ENCODE measurements at regions of chr11 and their contacts with region 1.

Region 1: DNA sequence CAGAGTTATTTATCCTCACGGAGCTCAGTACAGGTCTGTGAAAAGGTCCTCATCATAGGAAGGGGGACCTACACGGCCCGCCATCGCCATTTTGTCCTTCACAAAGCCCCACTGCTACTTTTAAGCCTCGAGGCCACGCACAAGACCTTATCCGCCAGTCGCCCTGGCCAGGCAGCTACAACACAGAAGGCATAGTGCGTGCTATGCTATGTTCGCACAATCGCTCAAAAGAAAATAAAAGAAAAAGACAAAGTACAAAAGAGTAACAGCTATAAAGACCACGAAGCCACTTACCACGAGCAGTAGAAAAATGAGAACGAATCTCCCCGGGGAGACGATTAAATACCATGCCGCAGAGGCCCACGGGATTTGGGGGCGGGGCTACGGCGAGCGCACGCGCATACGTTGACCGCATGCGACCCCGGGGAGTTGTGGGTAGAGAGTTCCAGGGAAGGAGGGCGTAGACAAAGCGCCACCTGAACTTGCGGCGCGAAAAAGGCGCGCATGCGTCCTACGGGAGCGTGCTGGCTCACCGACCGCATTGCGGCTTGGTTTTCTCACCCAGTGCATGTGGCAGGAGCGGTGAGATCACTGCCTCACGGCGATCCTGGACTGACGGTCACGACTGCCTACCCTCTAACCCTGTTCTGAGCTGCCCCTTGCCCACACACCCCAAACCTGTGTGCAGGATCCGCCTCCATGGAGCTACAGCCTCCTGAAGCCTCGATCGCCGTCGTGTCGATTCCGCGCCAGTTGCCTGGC is 16.4 kb upstream of the WDR74 start:
- DNase-seq: peak; percentile 98 to 99
- H3K4me3 ChIP-seq: peak overlapping the region; percentile 74 to 100 (median 90)
- H3K27ac ChIP-seq: peak overlapping the region; percentile 96
- H3K4me1 ChIP-seq: peaks cover 4 to 7% (median 7%) of the 10 kb centered on the region in 4 experiments; a peak in 4 of 7 replicates
- H3K27me3 ChIP-seq: no peaks in the 10 kb centered on the region
- CTCF ChIP-seq: no peak
- EP300 ChIP-seq: no peak
- POLR2A ChIP-seq: peak; percentile 98 to 99
- RAD21 ChIP-seq: no peak

Region 2: GRCh38 chr11:62580959-62581715 is 274.6 kb before region 1 on chr11:
- CTCF ChIA-PET with region 1: no interaction called
- POLR2A ChIA-PET with region 1: no interaction called
- DNase-seq: no peak
- H3K4me3 ChIP-seq: no peak overlapping the region
- H3K27ac ChIP-seq: no peak overlapping the region
- H3K4me1 ChIP-seq: no peaks in the 10 kb centered on the region
- H3K27me3 ChIP-seq: no peaks in the 10 kb centered on the region
- CTCF ChIP-seq: no peak
- EP300 ChIP-seq: no peak
- POLR2A ChIP-seq: no peak
- RAD21 ChIP-seq: no peak

Region 3: GRCh38 chr11:62726915-62727763 is 128.6 kb before region 1 on chr11 and contains the start of gene HNRNPUL2:
- CTCF ChIA-PET with region 1: no interaction called
- POLR2A ChIA-PET with region 1: interaction called, 98 read pairs
- DNase-seq: peak; percentile 94 to 97
- H3K4me3 ChIP-seq: peak within 1 kb of the TSS; percentile 87 to 98 (median 96)
- H3K27ac ChIP-seq: peak within 1 kb of the TSS; percentile 92
- H3K4me1 ChIP-seq: no peaks in the 10 kb centered on the region; a peak in 3 of 7 replicates
- H3K27me3 ChIP-seq: no peaks in the 10 kb centered on the region
- CTCF ChIP-seq: no peak
- EP300 ChIP-seq: 0 out of 3 replicates have a peak, but pooled peaks of 1 of the 2 experiments have one; percentile 25
- POLR2A ChIP-seq: peak; percentile 90
- RAD21 ChIP-seq: no peak
- total RNA-seq, gene HNRNPUL2: 44.3 and 46.4 TPM in 2 replicates

Region 4: GRCh38 chr11:62771144-62772021 is 84.4 kb before region 1 on chr11 and contains the start of gene TAF6L:
- CTCF ChIA-PET with region 1: interaction called, 3 read pairs
- POLR2A ChIA-PET with region 1: interaction called, 76 read pairs
- DNase-seq: peak; percentile 75 to 98
- H3K4me3 ChIP-seq: peak within 1 kb of the TSS; percentile 77 to 95 (median 92)
- H3K27ac ChIP-seq: peak within 1 kb of the TSS; percentile 72
- H3K4me1 ChIP-seq: peaks cover 0 to 9% (median 5%) of the 10 kb centered on the region in 4 experiments; a peak in 6 of 7 replicates
- H3K27me3 ChIP-seq: no peaks in the 10 kb centered on the region
- CTCF ChIP-seq: no peak
- EP300 ChIP-seq: no peak
- POLR2A ChIP-seq: peak; percentile 78 to 95
- RAD21 ChIP-seq: no peak
- total RNA-seq, gene TAF6L: 29.6 and 31.9 TPM in 2 replicates

Region 5: GRCh38 chr11:62805076-62805892 is 50.5 kb before region 1 on chr11 and contains the start of gene NXF1:
- CTCF ChIA-PET with region 1: no interaction called
- POLR2A ChIA-PET with region 1: interaction called, 67 read pairs
- DNase-seq: peak; percentile 96 to 100
- H3K4me3 ChIP-seq: peak within 1 kb of the TSS; percentile 66 to 85 (median 81)
- H3K27ac ChIP-seq: peak within 1 kb of the TSS; percentile 48; the same call in 1 of the 2 replicates
- H3K4me1 ChIP-seq: peaks cover 0 to 5% (median under 1%) of the 10 kb centered on the region in 4 experiments; a peak in 1 of 7 replicates
- H3K27me3 ChIP-seq: no peaks in the 10 kb centered on the region
- CTCF ChIP-seq: peak in 1 of 3 experiments; percentile 20; a peak in 1 of 4 replicates
- EP300 ChIP-seq: peak in 1 of 2 experiments; percentile 65; a peak in 1 of 3 replicates
- POLR2A ChIP-seq: peak; percentile 100
- RAD21 ChIP-seq: 0 out of 4 replicates have a peak, but pooled peaks of 1 of the 2 experiments have one; percentile 4
- total RNA-seq, gene NXF1: 44.8 and 49.8 TPM in 2 replicates

Region 6: DNA sequence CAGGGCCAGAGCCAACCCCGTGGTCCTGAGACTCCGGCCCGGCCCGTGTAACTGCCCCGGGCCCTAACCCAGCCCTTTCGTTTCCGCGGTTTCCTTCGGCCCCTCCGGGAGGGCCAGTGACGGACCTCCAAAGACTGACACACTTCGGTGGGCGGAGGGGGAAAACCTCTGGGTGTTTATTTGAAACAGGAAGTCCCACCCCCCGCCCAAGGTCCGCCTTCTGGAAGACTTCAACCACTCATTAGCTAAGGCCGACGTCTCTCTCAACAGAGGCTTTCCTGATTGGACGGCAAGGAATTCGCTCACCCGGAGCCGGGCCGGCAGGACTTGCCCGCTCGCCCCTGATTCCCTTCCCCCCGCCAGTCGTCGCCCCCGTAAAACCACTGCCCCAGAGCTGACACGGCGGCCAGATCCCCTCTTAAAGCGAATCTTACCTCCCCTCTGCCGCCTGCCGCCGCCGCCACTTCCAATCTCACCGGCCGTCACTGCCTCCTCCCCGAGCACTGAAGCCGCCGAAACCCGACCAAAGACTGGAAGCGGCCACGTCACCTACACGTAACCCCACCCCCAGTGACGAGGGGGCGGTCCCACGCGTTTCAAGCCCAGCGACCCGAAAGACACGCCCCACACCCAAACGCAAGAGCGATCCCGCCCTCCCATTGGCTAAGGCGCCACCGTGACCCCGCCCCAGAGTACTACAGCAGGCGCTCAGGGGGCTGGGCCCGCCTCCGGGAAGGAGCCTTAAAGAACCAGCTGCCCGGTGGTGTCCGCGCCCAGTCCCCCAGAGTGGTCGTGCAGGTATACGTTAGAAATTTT is 24.0 kb before region 1 on chr11 and contains the start of gene STX5:
- CTCF ChIA-PET with region 1: interaction called, 5 read pairs
- POLR2A ChIA-PET with region 1: interaction called, 398 read pairs
- DNase-seq: peak; percentile 96 to 99
- H3K4me3 ChIP-seq: peak within 1 kb of the TSS; percentile 76 to 94 (median 92)
- H3K27ac ChIP-seq: peak within 1 kb of the TSS; percentile 95
- H3K4me1 ChIP-seq: peaks cover 0 to 17% (median 2%) of the 10 kb centered on the region in 4 experiments; a peak in 2 of 7 replicates
- H3K27me3 ChIP-seq: no peaks in the 10 kb centered on the region
- CTCF ChIP-seq: no peak
- EP300 ChIP-seq: no peak
- POLR2A ChIP-seq: peak; percentile 53 to 96; a peak in 2 of 3 replicates
- RAD21 ChIP-seq: no peak
- total RNA-seq, gene STX5: 24.2 and 25.3 TPM in 2 replicates

Region 7: DNA sequence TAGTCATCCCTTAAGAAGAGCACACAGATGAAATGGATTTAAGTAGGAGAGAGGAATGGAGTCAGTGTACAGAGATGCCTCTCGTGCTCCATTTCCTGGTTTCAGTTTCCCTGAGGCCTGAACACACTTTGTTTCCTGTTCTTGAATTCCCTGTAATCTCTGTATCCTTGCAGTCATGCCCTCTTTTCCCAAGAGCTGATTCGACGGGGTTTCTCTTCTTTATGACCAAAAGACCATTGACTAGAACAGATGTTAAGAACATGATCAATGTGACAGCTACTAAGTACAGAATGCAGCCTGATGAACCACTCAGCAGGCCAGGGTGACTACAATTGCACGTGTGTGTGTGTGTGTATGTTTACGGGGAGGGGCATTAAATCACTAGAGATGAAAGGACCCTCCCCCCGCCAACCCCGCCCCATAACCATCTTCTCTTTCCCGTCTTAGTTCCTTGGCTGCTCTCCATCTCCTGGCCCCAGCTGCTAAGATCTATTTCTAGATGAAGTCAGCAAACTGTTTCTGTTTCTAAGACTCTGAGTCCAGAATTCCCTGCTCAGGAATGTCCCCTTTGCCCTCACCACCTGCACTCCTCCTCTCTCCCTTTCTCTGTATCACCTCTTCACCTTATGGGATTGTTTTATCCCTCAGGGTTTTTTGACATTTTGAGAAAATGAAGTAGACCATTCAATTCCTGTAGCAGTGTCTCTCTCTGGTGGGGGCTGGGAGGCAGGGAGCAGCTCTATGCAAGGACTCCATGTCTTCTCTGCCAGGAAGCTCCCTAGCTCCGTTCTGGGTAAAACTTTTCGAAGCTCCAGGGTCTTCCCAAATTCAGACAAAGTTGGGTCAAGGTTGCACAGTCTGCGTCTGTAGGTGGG is 103.0 kb after region 1 on chr11:
- CTCF ChIA-PET with region 1: no interaction called
- POLR2A ChIA-PET with region 1: no interaction called
- DNase-seq: no peak
- H3K4me3 ChIP-seq: no peak overlapping the region
- H3K27ac ChIP-seq: no peak overlapping the region
- H3K4me1 ChIP-seq: 0 out of 7 replicates have a peak, but pooled peaks cover 0 to 3% (median 0%) of the 10 kb centered on the region in 4 experiments
- H3K27me3 ChIP-seq: no peaks in the 10 kb centered on the region
- CTCF ChIP-seq: no peak
- EP300 ChIP-seq: no peak
- POLR2A ChIP-seq: no peak
- RAD21 ChIP-seq: no peak

Region 8: DNA sequence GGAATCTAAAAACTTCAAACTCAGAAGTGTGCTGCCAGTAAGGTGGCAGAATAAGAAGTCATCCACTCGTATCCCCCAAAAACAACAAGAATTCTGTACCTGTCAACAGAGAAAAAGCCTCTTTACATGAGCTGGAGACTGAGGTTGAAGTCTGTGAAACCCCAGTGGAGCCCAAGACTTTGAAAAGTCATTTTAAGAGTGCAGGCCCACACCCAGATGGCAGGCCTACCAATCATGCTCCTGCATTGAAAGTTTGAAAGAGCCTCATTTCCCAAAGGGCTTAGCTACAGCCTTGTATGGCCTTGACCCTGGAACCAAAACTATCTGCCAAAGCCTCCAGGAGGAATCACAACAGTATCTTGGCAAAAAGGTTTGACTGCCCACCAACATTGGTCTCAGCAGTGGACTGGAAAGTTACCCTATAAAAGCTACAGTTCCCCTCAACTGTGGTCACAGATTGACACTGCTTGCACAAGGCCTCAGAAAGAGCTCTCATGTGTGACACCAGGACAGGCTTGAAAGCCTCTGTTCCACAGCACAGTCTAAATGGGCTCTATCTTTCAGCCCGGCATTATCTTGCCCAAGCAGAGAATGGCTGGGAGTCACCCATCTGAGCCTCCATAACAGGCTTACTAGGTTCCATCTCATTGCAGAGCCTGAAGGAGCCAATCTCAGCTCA is 561.6 kb after region 1 on chr11:
- CTCF ChIA-PET with region 1: no interaction called
- POLR2A ChIA-PET with region 1: no interaction called
- DNase-seq: no peak
- H3K4me3 ChIP-seq: no peak overlapping the region
- H3K27ac ChIP-seq: no peak overlapping the region
- H3K4me1 ChIP-seq: peaks cover 0 to 2% (median 0%) of the 10 kb centered on the region in 4 experiments; a peak in 1 of 7 replicates
- H3K27me3 ChIP-seq: no peaks in the 10 kb centered on the region
- CTCF ChIP-seq: no peak
- EP300 ChIP-seq: no peak
- POLR2A ChIP-seq: no peak
- RAD21 ChIP-seq: no peak